ENCODE measurements at regions of chr5 and their contacts with region 1.

Region 1: GRCh38 chr5:160439205-160439600 is 17.5 kb downstream of the PTTG1 start:
- DNase-seq: peak; percentile 93
- ATAC-seq: peak; percentile 84
- H3K4me3 Mint-ChIP-seq: peak overlapping the region; percentile 66
- H3K27ac Mint-ChIP-seq: no peak overlapping the region
- H3K4me1 Mint-ChIP-seq: peaks cover 15% of the 10 kb centered on the region
- H3K27me3 Mint-ChIP-seq: no peaks in the 10 kb centered on the region
- CTCF ChIP-seq: peak; percentile 95

Region 2: GRCh38 chr5:160230686-160231527 is 208.3 kb before region 1 on chr5:
- CTCF ChIA-PET with region 1: no interaction called
- POLR2A ChIA-PET with region 1: no interaction called
- DNase-seq: no peak
- ATAC-seq: no peak
- H3K4me3 Mint-ChIP-seq: no peak overlapping the region
- H3K27ac Mint-ChIP-seq: no peak overlapping the region
- H3K4me1 Mint-ChIP-seq: peaks cover 4% of the 10 kb centered on the region; the same call in 1 of the 2 replicates
- H3K27me3 Mint-ChIP-seq: no peaks in the 10 kb centered on the region
- CTCF ChIP-seq: no peak

Region 3: GRCh38 chr5:160428328-160428727 is 10.9 kb before region 1 on chr5:
- CTCF ChIA-PET with region 1: interaction called, 26 read pairs
- POLR2A ChIA-PET with region 1: no interaction called
- DNase-seq: no peak
- ATAC-seq: no peak
- H3K4me3 Mint-ChIP-seq: no peak overlapping the region
- H3K27ac Mint-ChIP-seq: no peak overlapping the region
- H3K4me1 Mint-ChIP-seq: peaks cover 13% of the 10 kb centered on the region
- H3K27me3 Mint-ChIP-seq: no peaks in the 10 kb centered on the region
- CTCF ChIP-seq: no peak

Region 4: DNA sequence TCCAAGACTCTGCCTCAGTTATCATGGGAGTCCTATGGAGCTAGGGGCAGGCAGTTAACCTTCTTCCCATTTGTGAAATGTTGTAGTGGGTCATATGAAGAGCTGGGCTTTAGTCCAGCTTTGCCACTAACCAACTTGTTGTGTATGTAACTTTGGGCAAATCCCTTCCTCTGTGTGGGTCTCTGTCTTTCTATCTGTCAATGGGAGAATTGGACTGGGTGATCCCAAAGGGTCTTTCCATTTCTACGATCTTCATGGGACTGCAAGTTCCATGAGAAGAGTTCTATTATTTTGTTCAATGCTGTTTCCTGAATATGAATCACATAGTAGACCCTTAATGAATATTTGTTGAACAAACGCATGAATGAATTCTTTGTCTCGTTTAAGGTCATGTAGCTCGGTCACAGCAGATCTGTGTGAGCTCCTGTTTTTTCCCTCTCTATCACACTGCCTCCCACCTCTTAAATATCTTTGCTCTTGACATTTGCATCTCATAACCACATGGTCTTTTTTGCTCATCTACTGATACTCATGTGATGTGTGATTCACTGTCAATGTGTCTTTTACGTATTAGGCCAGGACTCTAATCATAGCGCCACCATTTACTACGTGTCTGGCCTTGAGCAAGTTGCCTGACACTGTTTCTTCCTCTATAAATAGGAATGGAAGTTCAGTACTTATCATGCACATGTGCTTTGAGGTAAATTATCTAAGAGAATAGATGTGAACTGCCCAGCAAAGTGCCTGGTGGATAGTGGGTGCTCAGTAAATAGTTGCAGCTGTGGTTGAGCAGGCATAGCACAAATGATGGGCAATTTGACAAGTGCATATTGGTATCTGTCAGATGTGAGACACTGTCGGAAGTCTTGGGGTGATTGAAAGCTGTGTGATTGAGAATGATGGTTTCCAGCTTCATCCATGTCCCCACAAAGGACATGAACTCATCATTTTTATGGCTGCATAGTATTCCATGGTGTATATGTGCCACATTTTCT is 19.9 kb after region 1 on chr5:
- CTCF ChIA-PET with region 1: interaction called, 36 read pairs
- POLR2A ChIA-PET with region 1: no interaction called
- DNase-seq: no peak
- ATAC-seq: no peak
- H3K4me3 Mint-ChIP-seq: no peak overlapping the region
- H3K27ac Mint-ChIP-seq: no peak overlapping the region
- H3K4me1 Mint-ChIP-seq: peaks cover 7% of the 10 kb centered on the region; the same call in 1 of the 2 replicates
- H3K27me3 Mint-ChIP-seq: no peaks in the 10 kb centered on the region
- CTCF ChIP-seq: no peak

Region 5: GRCh38 chr5:160485364-160485969 is 46.3 kb after region 1 on chr5:
- CTCF ChIA-PET with region 1: interaction called, 18 read pairs
- POLR2A ChIA-PET with region 1: no interaction called
- DNase-seq: no peak
- ATAC-seq: peak; percentile 90
- H3K4me3 Mint-ChIP-seq: no peak overlapping the region
- H3K27ac Mint-ChIP-seq: peak overlapping the region; percentile 63
- H3K4me1 Mint-ChIP-seq: peaks cover 46% of the 10 kb centered on the region
- H3K27me3 Mint-ChIP-seq: no peaks in the 10 kb centered on the region
- CTCF ChIP-seq: no peak

Region 6: GRCh38 chr5:160508780-160509361 is 69.7 kb after region 1 on chr5:
- CTCF ChIA-PET with region 1: interaction called, 75 read pairs
- POLR2A ChIA-PET with region 1: no interaction called
- DNase-seq: peak; percentile 57
- ATAC-seq: peak; percentile 84
- H3K4me3 Mint-ChIP-seq: no peak overlapping the region
- H3K27ac Mint-ChIP-seq: no peak overlapping the region
- H3K4me1 Mint-ChIP-seq: peaks cover 29% of the 10 kb centered on the region
- H3K27me3 Mint-ChIP-seq: no peaks in the 10 kb centered on the region
- CTCF ChIP-seq: peak; percentile 77

Region 7: DNA sequence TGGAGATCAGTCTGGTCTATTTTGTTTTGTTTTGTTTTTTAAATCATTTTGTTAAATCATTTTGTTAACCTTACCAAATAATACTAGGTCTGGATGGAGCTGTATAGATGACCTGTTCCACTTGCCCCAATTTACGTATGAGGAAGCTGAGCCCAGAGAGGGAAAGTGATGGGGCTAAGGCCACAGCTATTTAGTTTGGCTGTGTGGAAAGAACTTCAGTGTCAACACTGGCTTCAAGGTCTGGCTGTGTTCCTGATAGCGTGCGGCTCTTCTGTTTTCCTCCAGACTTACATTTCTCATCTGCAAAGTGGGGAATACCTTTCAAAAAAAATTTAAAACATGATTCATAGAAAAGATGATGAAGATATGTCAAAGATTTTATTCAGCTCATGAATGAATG is 94.9 kb after region 1 on chr5:
- CTCF ChIA-PET with region 1: interaction called, 11 read pairs
- POLR2A ChIA-PET with region 1: no interaction called
- DNase-seq: no peak
- ATAC-seq: no peak
- H3K4me3 Mint-ChIP-seq: no peak overlapping the region
- H3K27ac Mint-ChIP-seq: no peak overlapping the region
- H3K4me1 Mint-ChIP-seq: peaks cover 11% of the 10 kb centered on the region
- H3K27me3 Mint-ChIP-seq: no peaks in the 10 kb centered on the region
- CTCF ChIP-seq: no peak

Measured in WTC11 (cell line).